Natural killer cell (primary cell): ENCODE measurements at regions of chr11 and their contacts with region 1.

Region 1: GRCh38 chr11:68506908-68507307 is 46.4 kb downstream of the PPP6R3 start:
- DNase-seq: peak in 1 of 2 donors; percentile 18
- ATAC-seq: peak in 1 of 3 donors; percentile 32
- H3K4me3 ChIP-seq: no peak overlapping the region
- H3K4me3 Mint-ChIP-seq: peak overlapping the region; percentile 62
- H3K27ac ChIP-seq: no peak overlapping the region
- H3K27ac Mint-ChIP-seq: peak overlapping the region; percentile 22 to 73
- H3K4me1 ChIP-seq: peaks cover 29% of the 10 kb centered on the region
- H3K4me1 Mint-ChIP-seq: peaks cover 85 to 86% of the 10 kb centered on the region in 2 donors
- H3K27me3 ChIP-seq: no peaks in the 10 kb centered on the region
- H3K27me3 Mint-ChIP-seq: no peaks in the 10 kb centered on the region
- CTCF ChIP-seq: no peak

Region 2: DNA sequence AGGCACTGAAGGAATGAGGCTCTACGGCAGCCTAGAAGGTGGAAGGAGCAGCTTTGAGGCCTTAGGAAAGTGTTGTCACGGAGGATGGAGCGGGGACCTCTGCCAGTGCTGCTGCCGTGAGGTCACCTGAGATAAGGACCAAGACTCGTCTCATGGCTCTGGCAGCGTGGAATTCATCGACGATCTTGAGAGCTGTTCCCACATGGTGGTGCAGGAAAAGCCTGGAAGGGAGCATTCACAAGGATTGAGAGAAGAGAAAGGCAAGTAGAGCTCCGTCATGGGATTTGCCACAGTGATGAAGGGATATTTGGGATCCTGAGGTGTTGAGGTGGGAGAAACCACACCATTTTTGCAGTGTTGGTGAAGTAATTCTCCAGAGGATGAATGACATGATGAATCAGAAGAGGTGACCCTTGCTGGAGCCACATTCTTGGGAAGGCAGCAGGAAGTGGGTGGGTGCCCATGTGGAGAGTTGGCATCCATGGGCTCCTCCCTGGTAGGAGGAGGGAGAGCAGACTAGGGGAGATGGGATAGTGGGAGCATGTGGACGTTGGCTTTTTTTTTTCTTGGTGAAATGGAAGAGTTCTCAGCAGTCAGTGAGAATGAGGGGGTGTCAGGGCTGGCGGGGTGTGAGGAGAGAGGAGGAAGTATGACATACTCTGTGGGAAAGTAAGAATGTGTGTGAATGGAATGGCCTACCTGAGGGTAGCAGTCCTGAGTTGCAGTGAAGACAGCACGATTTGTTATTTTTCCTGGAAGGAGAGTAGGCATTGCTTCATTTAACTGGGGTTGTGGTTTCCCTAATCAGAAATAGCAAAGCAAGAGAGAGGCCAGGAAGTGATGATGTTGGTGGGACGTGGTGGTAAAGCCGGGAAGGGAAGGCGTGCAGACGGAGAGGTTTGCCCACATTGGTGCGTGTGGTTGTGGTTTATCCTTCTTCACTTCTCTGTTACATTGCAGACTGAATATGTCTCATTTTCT is 35.3 kb before region 1 on chr11:
- intact Hi-C with region 1: loop called (anchors 5 kb)
- DNase-seq: peak in 1 of 2 donors; percentile 70
- ATAC-seq: peak; percentile 54 to 70 (median 65)
- H3K4me3 ChIP-seq: no peak overlapping the region
- H3K4me3 Mint-ChIP-seq: peak overlapping the region; percentile 82
- H3K27ac ChIP-seq: peak overlapping the region; percentile 27
- H3K27ac Mint-ChIP-seq: peak overlapping the region; percentile 52 to 82
- H3K4me1 ChIP-seq: peaks cover 59% of the 10 kb centered on the region
- H3K4me1 Mint-ChIP-seq: peaks cover 71 to 72% of the 10 kb centered on the region in 2 donors
- H3K27me3 ChIP-seq: no peaks in the 10 kb centered on the region
- H3K27me3 Mint-ChIP-seq: no peaks in the 10 kb centered on the region
- CTCF ChIP-seq: no peak

Region 3: GRCh38 chr11:68488623-68489022 is 18.3 kb before region 1 on chr11:
- intact Hi-C with region 1: loop called (anchors 2 kb)
- DNase-seq: no peak
- ATAC-seq: no peak
- H3K4me3 ChIP-seq: no peak overlapping the region
- H3K4me3 Mint-ChIP-seq: peak overlapping the region; percentile 21
- H3K27ac ChIP-seq: no peak overlapping the region
- H3K27ac Mint-ChIP-seq: peak overlapping the region; percentile 18 to 80
- H3K4me1 ChIP-seq: peaks cover 18% of the 10 kb centered on the region
- H3K4me1 Mint-ChIP-seq: peaks cover 71 to 77% of the 10 kb centered on the region in 2 donors
- H3K27me3 ChIP-seq: no peaks in the 10 kb centered on the region
- H3K27me3 Mint-ChIP-seq: no peaks in the 10 kb centered on the region
- CTCF ChIP-seq: no peak

Region 4: GRCh38 chr11:68643585-68643984 is 136.7 kb after region 1 on chr11:
- intact Hi-C with region 1: no loop called
- DNase-seq: no peak
- ATAC-seq: no peak
- H3K4me3 ChIP-seq: no peak overlapping the region
- H3K4me3 Mint-ChIP-seq: no peak overlapping the region
- H3K27ac ChIP-seq: no peak overlapping the region
- H3K27ac Mint-ChIP-seq: no peak overlapping the region
- H3K4me1 ChIP-seq: no peaks in the 10 kb centered on the region
- H3K4me1 Mint-ChIP-seq: no peaks in the 10 kb centered on the region
- H3K27me3 ChIP-seq: peaks cover 3% of the 10 kb centered on the region
- H3K27me3 Mint-ChIP-seq: peaks cover 5 to 21% of the 10 kb centered on the region in 2 donors
- CTCF ChIP-seq: no peak